ENCODE measurements at regions of chr12 and their contacts with region 1.

Region 1: DNA sequence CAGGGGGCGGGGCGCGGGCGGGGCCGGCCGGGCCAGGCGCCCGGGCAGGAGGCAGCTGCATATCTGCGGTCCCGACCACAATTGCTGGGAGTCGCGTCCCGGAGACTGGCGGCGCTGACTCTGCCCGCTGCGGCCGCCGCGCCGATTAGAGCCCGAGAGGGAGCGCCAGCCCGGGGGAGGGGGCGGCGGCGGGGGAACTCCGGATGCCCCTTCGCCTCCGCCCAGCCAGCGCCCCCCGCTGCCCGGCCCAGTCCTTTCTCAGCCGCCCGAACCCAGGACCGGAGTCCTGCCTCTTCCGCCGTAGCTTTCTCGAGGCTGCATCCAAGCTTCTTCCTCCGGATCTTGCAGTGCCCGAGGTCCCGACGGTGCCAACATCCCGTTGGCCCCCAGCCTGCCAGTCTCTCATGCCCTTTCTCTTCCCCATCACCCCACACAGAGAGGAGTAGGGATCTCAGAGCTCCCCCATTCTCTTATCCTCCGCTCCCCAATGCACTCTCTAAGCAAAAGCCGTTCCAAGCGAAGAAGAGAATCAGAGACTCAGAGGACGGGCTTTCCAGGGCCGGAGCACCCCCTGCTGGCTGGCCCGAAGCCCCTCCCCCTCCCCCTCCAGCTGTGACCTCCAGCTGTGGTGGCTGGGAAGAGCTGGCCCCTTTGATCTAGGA is 8.8 kb upstream of the SP7 start:
- DNase-seq: no peak
- ATAC-seq: peak; percentile 95
- H3K4me3 ChIP-seq: peak overlapping the region; percentile 80
- H3K27ac ChIP-seq: no peak overlapping the region
- H3K4me1 ChIP-seq: peaks cover 5% of the 10 kb centered on the region
- H3K27me3 ChIP-seq: peaks cover 0 to 5% of the 10 kb centered on the region in 2 experiments; a peak in 1 of 4 replicates
- CTCF ChIP-seq: peak; percentile 68 to 90 (median 87)
- EP300 ChIP-seq: no peak
- POLR2A ChIP-seq: 0 out of 2 replicates have a peak, but pooled peaks have one; percentile 32
- RAD21 ChIP-seq: peak; percentile 81

Region 2: DNA sequence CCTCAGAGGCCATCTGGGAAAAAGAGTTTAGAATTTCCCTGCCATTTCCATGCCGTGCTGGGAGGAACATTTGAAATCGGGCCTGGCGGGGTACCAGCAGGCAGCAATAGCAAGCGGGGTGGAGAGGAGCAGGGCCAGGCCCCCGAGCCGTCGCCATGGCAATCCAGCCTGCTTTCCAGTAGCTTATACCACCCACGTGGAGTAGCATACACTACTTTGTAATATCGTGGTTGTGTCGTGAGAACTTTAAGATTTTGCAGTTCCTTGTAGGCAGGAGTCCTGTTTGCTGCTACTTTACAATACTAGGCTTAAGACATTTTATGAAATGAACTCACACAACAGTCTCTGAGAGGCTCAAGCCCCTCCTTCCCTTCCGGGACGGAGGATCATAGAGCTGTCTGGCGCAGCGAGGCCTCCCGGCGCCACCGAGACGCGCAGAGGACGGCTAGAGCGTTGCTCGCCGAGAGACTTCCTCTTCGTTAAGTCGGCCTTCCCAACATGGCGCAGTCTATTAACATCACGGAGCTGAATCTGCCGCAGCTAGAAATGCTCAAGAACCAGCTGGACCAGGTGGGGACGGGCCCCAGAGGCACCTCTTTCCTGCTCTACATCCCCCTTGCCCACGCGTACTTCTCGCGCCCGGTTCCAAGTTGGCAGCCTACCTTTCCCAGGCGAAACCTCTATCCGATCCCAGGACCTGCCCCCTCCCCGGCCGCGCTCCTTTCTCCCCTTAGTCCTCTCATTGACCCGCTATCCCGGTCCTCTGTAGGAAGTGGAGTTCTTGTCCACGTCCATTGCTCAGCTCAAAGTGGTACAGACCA is 49.7 kb before region 1 on chr12 and contains the start of gene PFDN5:
- CTCF ChIA-PET with region 1: interaction called, 6 read pairs
- POLR2A ChIA-PET with region 1: no interaction called
- RAD21 ChIA-PET with region 1: interaction called, 13 read pairs
- SMC1A ChIA-PET with region 1: interaction called, 7 read pairs
- in situ Hi-C with region 1: no loop called
- intact Hi-C with region 1: no loop called
- DNase-seq: peak; percentile 73
- ATAC-seq: peak; percentile 95
- H3K4me3 ChIP-seq: peak within 1 kb of the TSS; percentile 82
- H3K27ac ChIP-seq: peak within 1 kb of the TSS; percentile 75
- H3K4me1 ChIP-seq: peaks cover 21% of the 10 kb centered on the region
- H3K27me3 ChIP-seq: no peaks in the 10 kb centered on the region
- CTCF ChIP-seq: peak in 1 of 3 experiments; percentile 8; a peak in 1 of 6 replicates
- EP300 ChIP-seq: 0 out of 4 replicates have a peak, but pooled peaks of 1 of the 2 experiments have one; percentile 27
- POLR2A ChIP-seq: peak; percentile 90
- RAD21 ChIP-seq: no peak
- polyA plus RNA-seq, gene PFDN5: 1,522 to 1,596 TPM

Region 3: GRCh38 chr12:53327435-53328042 is 17.4 kb before region 1 on chr12:
- CTCF ChIA-PET with region 1: interaction called, 240 read pairs
- POLR2A ChIA-PET with region 1: interaction called, 41 read pairs
- RAD21 ChIA-PET with region 1: interaction called, 118 read pairs
- SMC1A ChIA-PET with region 1: interaction called, 123 read pairs
- in situ Hi-C with region 1: no loop called
- intact Hi-C with region 1: loop called (anchors 1 kb)
- DNase-seq: no peak
- ATAC-seq: no peak
- H3K4me3 ChIP-seq: no peak overlapping the region
- H3K27ac ChIP-seq: no peak overlapping the region
- H3K4me1 ChIP-seq: peaks cover 17% of the 10 kb centered on the region; the same call in 1 of the 2 replicates
- H3K27me3 ChIP-seq: peaks cover 0 to 1% of the 10 kb centered on the region in 2 experiments; a peak in 2 of 4 replicates
- CTCF ChIP-seq: peak; percentile 18 to 38 (median 24); a peak in 3 of 6 replicates
- EP300 ChIP-seq: no peak
- POLR2A ChIP-seq: no peak
- RAD21 ChIP-seq: peak; percentile 48

Region 4: DNA sequence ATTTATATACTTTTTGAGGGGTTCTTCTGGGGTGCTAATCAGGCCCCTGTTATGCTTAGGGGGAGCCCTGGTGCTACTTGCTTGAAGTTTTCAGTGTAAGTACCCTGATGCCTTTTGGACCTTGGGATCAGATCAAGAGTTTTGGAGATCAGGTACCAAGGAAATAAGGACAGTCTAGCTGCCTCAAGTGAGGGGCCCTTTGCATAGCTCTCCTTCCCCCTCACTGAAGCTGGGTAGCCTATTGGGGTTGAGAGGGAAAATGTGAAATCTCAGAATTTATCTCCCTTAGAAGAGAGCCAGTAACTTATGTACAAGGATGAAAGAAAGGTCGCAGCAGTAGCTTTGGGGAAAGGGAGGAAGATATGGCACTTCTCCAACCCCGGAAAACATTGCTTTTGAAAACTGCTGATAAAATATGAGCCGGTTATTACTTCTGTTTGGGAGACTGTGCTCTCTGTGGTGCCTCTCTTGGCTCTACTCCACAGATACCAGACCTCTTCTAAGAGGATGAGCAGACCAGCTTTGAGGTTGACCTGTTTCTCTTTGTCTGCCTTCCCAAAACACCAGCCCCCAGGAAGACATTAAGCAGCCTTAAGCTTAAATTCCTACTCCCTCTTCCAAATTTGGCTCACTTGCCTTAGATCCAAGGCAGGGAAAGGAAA is 69.9 kb after region 1 on chr12:
- CTCF ChIA-PET with region 1: interaction called, 225 read pairs
- POLR2A ChIA-PET with region 1: interaction called, 5 read pairs
- RAD21 ChIA-PET with region 1: interaction called, 3 read pairs
- SMC1A ChIA-PET with region 1: interaction called, 164 read pairs
- in situ Hi-C with region 1: loop called (anchors 5 kb)
- intact Hi-C with region 1: no loop called
- DNase-seq: no peak
- ATAC-seq: no peak
- H3K4me3 ChIP-seq: no peak overlapping the region
- H3K27ac ChIP-seq: no peak overlapping the region
- H3K4me1 ChIP-seq: peaks cover 18% of the 10 kb centered on the region
- H3K27me3 ChIP-seq: no peaks in the 10 kb centered on the region
- CTCF ChIP-seq: no peak
- EP300 ChIP-seq: no peak
- POLR2A ChIP-seq: no peak
- RAD21 ChIP-seq: no peak

Region 5: GRCh38 chr12:53427905-53428594 is 83.1 kb after region 1 on chr12:
- CTCF ChIA-PET with region 1: interaction called, 225 read pairs
- POLR2A ChIA-PET with region 1: interaction called, 4 read pairs
- RAD21 ChIA-PET with region 1: interaction called, 5 read pairs
- SMC1A ChIA-PET with region 1: interaction called, 164 read pairs
- in situ Hi-C with region 1: loop called (anchors 5 kb)
- intact Hi-C with region 1: no loop called
- DNase-seq: no peak
- ATAC-seq: peak; percentile 56
- H3K4me3 ChIP-seq: no peak overlapping the region
- H3K27ac ChIP-seq: no peak overlapping the region
- H3K4me1 ChIP-seq: no peaks in the 10 kb centered on the region
- H3K27me3 ChIP-seq: no peaks in the 10 kb centered on the region
- CTCF ChIP-seq: no peak
- EP300 ChIP-seq: no peak
- POLR2A ChIP-seq: no peak
- RAD21 ChIP-seq: no peak

Region 6: DNA sequence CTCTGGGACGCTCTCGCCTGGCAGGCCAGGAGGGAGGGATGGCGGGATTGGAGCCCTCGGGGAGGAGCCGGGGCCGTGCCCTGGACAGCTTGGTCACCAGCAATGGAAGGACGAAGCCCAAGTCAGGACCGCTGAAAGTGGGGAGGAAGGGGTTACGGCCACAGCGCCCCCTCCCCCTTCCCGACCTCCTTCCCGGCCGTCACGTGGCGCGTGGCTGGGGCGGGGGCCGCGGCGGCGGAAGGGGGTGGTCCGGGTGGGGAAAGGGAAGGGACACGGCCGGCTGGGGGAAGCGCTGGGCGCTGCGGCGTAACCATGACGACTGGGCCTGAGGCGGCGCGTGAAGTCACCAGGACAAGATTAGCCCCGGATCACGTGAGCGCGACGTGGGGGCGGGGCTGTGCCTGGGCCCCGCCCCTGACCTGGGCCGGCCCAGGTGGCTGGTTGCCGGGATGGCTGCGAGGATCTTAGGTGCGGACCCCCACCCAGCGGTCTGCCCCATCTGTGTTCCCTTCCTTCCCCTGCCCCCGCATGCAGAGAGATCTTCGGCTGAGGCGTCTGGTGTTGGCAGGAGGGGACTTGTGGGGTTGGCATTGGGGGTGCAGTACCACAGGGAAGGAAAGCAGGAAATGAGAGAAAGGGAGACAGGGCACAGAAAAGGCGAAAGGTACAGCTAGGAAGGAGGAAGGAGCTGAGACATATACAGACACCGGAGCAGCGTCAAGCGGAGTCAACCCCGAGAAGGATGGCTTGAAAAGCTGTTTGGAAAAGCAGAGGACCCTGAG is 148.1 kb after region 1 on chr12:
- CTCF ChIA-PET with region 1: no interaction called
- POLR2A ChIA-PET with region 1: no interaction called
- RAD21 ChIA-PET with region 1: no interaction called
- SMC1A ChIA-PET with region 1: no interaction called
- in situ Hi-C with region 1: no loop called
- intact Hi-C with region 1: no loop called
- DNase-seq: peak; percentile 46
- ATAC-seq: peak; percentile 96
- H3K4me3 ChIP-seq: peak overlapping the region; percentile 87
- H3K27ac ChIP-seq: peak overlapping the region; percentile 46; the same call in 1 of the 2 replicates
- H3K4me1 ChIP-seq: peaks cover 10% of the 10 kb centered on the region
- H3K27me3 ChIP-seq: no peaks in the 10 kb centered on the region
- CTCF ChIP-seq: no peak
- EP300 ChIP-seq: no peak
- POLR2A ChIP-seq: peak; percentile 83
- RAD21 ChIP-seq: no peak

Measured in GM12878 (cell line).